ENCODE measurements at regions of chr13 and their contacts with region 1.

Region 1: GRCh38 chr13:48975856-48976575 is at the start of gene FNDC3A:
- DNase-seq: peak; percentile 88 to 92 (median 89)
- H3K4me3 ChIP-seq: peak within 1 kb of the TSS; percentile 81 to 83
- H3K4me3 Mint-ChIP-seq: peak within 1 kb of the TSS; percentile 94 to 98 (median 96)
- H3K27ac ChIP-seq: peak within 1 kb of the TSS; percentile 90
- H3K27ac Mint-ChIP-seq: peak within 1 kb of the TSS; percentile 90 to 99 (median 99)
- H3K4me1 ChIP-seq: peaks cover 51% of the 10 kb centered on the region
- H3K4me1 Mint-ChIP-seq: peaks cover 28 to 55% (median 40%) of the 10 kb centered on the region in 4 donors
- H3K27me3 ChIP-seq: no peaks in the 10 kb centered on the region
- H3K27me3 Mint-ChIP-seq: peaks cover 0 to 3% of the 10 kb centered on the region in 2 donors
- total RNA-seq, gene FNDC3A: 43.7 to 44.4 TPM

Region 2: GRCh38 chr13:48094781-48095502 is 881.1 kb before region 1 on chr13 and contains the start of gene MED4:
- CTCF ChIA-PET with region 1: no interaction called
- POLR2A ChIA-PET with region 1: no interaction called
- intact Hi-C with region 1: loop called (anchors 2 kb)
- DNase-seq: peak; percentile 95 to 98 (median 97)
- H3K4me3 ChIP-seq: peak within 1 kb of the TSS; percentile 73 to 76
- H3K4me3 Mint-ChIP-seq: peak within 1 kb of the TSS; percentile 93 to 98 (median 96)
- H3K27ac ChIP-seq: peak within 1 kb of the TSS; percentile 96
- H3K27ac Mint-ChIP-seq: peak within 1 kb of the TSS; percentile 92 to 99 (median 98)
- H3K4me1 ChIP-seq: peaks cover 37% of the 10 kb centered on the region
- H3K4me1 Mint-ChIP-seq: peaks cover 24 to 54% (median 35%) of the 10 kb centered on the region in 4 donors
- H3K27me3 ChIP-seq: no peaks in the 10 kb centered on the region
- H3K27me3 Mint-ChIP-seq: peaks cover 0 to 2% of the 10 kb centered on the region in 2 donors
- total RNA-seq, gene MED4: 50.6 to 53.5 TPM

Region 3: GRCh38 chr13:48783181-48783630 is 192.8 kb before region 1 on chr13:
- CTCF ChIA-PET with region 1: no interaction called
- POLR2A ChIA-PET with region 1: no interaction called
- intact Hi-C with region 1: no loop called
- DNase-seq: no peak
- H3K4me3 ChIP-seq: no peak overlapping the region
- H3K4me3 Mint-ChIP-seq: no peak overlapping the region
- H3K27ac ChIP-seq: no peak overlapping the region
- H3K27ac Mint-ChIP-seq: no peak overlapping the region
- H3K4me1 ChIP-seq: no peaks in the 10 kb centered on the region
- H3K4me1 Mint-ChIP-seq: no peaks in the 10 kb centered on the region
- H3K27me3 ChIP-seq: no peaks in the 10 kb centered on the region
- H3K27me3 Mint-ChIP-seq: peaks cover 2 to 3% of the 10 kb centered on the region in 2 donors

Region 4: DNA sequence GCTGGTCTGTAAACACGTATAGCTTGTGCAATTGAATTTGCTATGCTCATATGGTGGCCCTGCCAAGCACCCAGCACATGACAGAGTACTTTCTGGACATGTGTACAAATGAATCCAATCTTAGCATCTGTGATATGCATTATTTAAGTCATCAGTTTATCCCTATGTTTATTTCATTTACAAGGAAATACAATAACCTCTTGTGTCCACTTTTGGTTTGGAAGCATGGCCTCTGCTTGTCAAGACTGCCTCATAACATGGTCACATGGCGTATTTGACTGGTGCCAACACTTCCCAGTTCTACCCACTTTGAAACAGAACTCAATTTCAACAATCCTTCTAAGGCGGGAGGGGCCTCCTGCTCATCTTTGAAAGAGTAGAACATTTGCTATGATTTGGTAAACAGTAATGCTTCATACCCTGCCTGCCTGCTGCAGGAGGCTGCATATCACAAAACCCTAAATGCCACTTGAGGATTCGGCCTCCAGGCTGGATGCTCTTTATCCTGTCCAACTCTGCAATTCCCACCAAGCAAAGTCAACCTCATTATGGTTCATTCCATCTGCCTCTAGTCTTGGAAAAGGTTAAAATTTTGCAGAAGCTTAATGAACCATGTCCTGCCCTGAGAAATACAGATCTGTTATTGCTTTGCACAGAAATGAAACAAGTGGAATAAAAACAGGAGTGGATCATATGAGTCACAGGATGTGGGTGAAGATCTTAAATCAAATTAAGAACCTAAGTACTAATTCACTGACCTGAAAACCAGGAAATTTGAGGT is 171.0 kb before region 1 on chr13:
- CTCF ChIA-PET with region 1: no interaction called
- POLR2A ChIA-PET with region 1: interaction called, 15 read pairs
- intact Hi-C with region 1: loop called (anchors 2 kb)
- DNase-seq: peak in 3 of 5 donors; percentile 17 to 30 (median 23)
- H3K4me3 ChIP-seq: no peak overlapping the region
- H3K4me3 Mint-ChIP-seq: peak overlapping the region; percentile 1 to 74 (median 50)
- H3K27ac ChIP-seq: no peak overlapping the region
- H3K27ac Mint-ChIP-seq: peak overlapping the region; percentile 31 to 86 (median 81)
- H3K4me1 ChIP-seq: peaks cover 24% of the 10 kb centered on the region
- H3K4me1 Mint-ChIP-seq: peaks cover 22 to 45% (median 38%) of the 10 kb centered on the region in 4 donors
- H3K27me3 ChIP-seq: no peaks in the 10 kb centered on the region
- H3K27me3 Mint-ChIP-seq: no peaks in the 10 kb centered on the region

Region 5: GRCh38 chr13:49110122-49110912 is 134.3 kb after region 1 on chr13:
- CTCF ChIA-PET with region 1: no interaction called
- POLR2A ChIA-PET with region 1: interaction called, 38 read pairs
- intact Hi-C with region 1: loop called (anchors 1 kb)
- DNase-seq: peak; percentile 72 to 80 (median 75)
- H3K4me3 ChIP-seq: peak overlapping the region; percentile 76 to 78
- H3K4me3 Mint-ChIP-seq: peak overlapping the region; percentile 86 to 94 (median 92)
- H3K27ac ChIP-seq: peak overlapping the region; percentile 65
- H3K27ac Mint-ChIP-seq: peak overlapping the region; percentile 84 to 95 (median 92)
- H3K4me1 ChIP-seq: peaks cover 40% of the 10 kb centered on the region
- H3K4me1 Mint-ChIP-seq: peaks cover 24 to 46% (median 29%) of the 10 kb centered on the region in 4 donors
- H3K27me3 ChIP-seq: no peaks in the 10 kb centered on the region
- H3K27me3 Mint-ChIP-seq: no peaks in the 10 kb centered on the region

Region 6: GRCh38 chr13:49247643-49248621 is 271.9 kb after region 1 on chr13 and contains the start of gene CDADC1:
- CTCF ChIA-PET with region 1: interaction called, 3 read pairs
- POLR2A ChIA-PET with region 1: interaction called, 8 read pairs
- intact Hi-C with region 1: loop called (anchors 1 kb)
- DNase-seq: peak; percentile 77 to 87 (median 81)
- H3K4me3 ChIP-seq: peak within 1 kb of the TSS; percentile 86 to 89
- H3K4me3 Mint-ChIP-seq: peak within 1 kb of the TSS; percentile 94 to 99 (median 97)
- H3K27ac ChIP-seq: peak within 1 kb of the TSS; percentile 89
- H3K27ac Mint-ChIP-seq: peak within 1 kb of the TSS; percentile 95 to 99 (median 97)
- H3K4me1 ChIP-seq: peaks cover 48% of the 10 kb centered on the region
- H3K4me1 Mint-ChIP-seq: peaks cover 24 to 51% (median 38%) of the 10 kb centered on the region in 4 donors
- H3K27me3 ChIP-seq: no peaks in the 10 kb centered on the region
- H3K27me3 Mint-ChIP-seq: peaks cover 0 to 4% of the 10 kb centered on the region in 2 donors
- total RNA-seq, gene CDADC1: 14.7 to 15.9 TPM

Region 7: GRCh38 chr13:49348751-49349150 is 372.7 kb after region 1 on chr13:
- CTCF ChIA-PET with region 1: no interaction called
- POLR2A ChIA-PET with region 1: no interaction called
- intact Hi-C with region 1: no loop called
- DNase-seq: no peak
- H3K4me3 ChIP-seq: no peak overlapping the region
- H3K4me3 Mint-ChIP-seq: no peak overlapping the region
- H3K27ac ChIP-seq: no peak overlapping the region
- H3K27ac Mint-ChIP-seq: no peak overlapping the region
- H3K4me1 ChIP-seq: no peaks in the 10 kb centered on the region
- H3K4me1 Mint-ChIP-seq: peaks cover 0 to 3% (median 1%) of the 10 kb centered on the region in 4 donors
- H3K27me3 ChIP-seq: no peaks in the 10 kb centered on the region
- H3K27me3 Mint-ChIP-seq: no peaks in the 10 kb centered on the region